ENCODE measurements at regions of chr2 and their contacts with region 1.

Region 1: DNA sequence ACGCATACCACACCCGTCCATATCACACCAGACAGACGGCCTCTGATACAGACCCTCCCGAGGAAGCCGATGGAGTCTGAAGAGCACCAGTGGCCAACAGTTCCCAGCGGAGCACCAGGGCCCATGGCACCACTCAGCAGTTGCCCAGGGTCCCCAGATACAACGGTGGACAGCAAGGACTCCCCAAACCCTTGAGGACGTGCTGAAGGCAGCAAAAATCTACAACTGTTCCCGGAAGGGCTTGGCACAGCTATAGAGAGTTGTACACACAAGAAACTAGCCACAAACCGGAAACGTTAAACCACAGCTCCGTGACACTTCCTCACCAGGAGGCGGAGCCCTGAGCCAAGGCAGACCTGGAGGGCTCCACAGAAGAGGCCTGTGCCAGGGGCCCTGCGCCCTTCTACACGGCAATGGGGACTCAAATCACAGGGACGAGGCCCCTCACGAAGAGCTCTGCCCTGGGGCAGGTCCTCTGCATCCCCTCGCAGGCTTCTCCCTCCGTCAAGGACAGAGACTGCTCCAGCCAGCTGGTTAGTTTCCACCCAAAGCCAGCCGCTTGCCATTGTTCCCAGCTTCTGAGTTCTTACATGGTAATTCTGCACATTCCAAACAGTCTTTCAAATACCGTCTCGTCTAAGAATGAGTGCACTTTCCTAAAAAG is 133.4 kb downstream of the HDAC4 start:
- DNase-seq: peak; percentile 87 to 98
- ATAC-seq: peak; percentile 80 to 93 (median 89)
- H3K4me3 ChIP-seq: peak overlapping the region; percentile 81
- H3K4me3 Mint-ChIP-seq: peak overlapping the region; percentile 98
- H3K27ac ChIP-seq: peak overlapping the region; percentile 91
- H3K27ac Mint-ChIP-seq: peak overlapping the region; percentile 99
- H3K4me1 ChIP-seq: peaks cover 77% of the 10 kb centered on the region
- H3K4me1 Mint-ChIP-seq: peaks cover 75 to 78% of the 10 kb centered on the region in 2 donors
- H3K27me3 ChIP-seq: no peaks in the 10 kb centered on the region
- H3K27me3 Mint-ChIP-seq: no peaks in the 10 kb centered on the region
- CTCF ChIP-seq: peak; percentile 29

Region 2: DNA sequence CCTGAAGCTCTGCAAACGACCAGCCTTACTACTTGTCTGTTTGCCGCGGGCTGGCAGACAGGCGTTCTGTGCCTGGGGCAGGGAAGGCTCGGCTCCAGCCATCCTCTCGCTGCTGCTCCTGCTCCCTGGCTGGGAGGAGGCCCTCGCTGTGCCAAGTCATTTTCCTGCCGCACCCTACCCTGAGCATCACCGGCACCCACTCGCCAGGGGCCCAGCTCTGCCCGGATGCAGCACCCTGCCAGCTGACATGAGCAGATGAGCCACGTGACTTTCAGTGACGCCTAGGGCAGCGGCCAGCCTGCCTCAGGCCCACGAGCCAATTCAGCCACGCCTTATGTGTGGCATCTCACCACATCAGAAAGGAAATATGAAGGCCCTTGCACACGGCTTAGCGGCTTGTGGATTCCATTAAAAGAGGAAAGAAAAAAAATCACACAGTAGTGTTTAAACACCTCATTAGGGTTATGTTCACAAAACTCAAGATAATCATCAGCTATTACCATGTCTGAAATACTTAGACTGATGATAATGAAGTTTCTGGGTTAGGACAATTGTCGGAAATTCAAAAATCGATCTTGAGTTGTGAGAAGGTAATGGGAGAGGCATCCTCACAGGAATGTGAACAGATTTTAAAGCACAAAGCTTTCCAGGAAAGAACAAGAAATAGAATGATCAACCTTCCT is 169.0 kb before region 1 on chr2:
- intact Hi-C with region 1: loop called (anchors 5 kb)
- DNase-seq: peak in 1 of 2 donors; percentile 55
- ATAC-seq: peak; percentile 84 to 93 (median 90)
- H3K4me3 ChIP-seq: no peak overlapping the region
- H3K4me3 Mint-ChIP-seq: peak overlapping the region; percentile 82
- H3K27ac ChIP-seq: peak overlapping the region; percentile 45
- H3K27ac Mint-ChIP-seq: peak overlapping the region; percentile 92
- H3K4me1 ChIP-seq: peaks cover 21% of the 10 kb centered on the region
- H3K4me1 Mint-ChIP-seq: peaks cover 21 to 28% of the 10 kb centered on the region in 2 donors
- H3K27me3 ChIP-seq: no peaks in the 10 kb centered on the region
- H3K27me3 Mint-ChIP-seq: no peaks in the 10 kb centered on the region
- CTCF ChIP-seq: no peak

Region 3: DNA sequence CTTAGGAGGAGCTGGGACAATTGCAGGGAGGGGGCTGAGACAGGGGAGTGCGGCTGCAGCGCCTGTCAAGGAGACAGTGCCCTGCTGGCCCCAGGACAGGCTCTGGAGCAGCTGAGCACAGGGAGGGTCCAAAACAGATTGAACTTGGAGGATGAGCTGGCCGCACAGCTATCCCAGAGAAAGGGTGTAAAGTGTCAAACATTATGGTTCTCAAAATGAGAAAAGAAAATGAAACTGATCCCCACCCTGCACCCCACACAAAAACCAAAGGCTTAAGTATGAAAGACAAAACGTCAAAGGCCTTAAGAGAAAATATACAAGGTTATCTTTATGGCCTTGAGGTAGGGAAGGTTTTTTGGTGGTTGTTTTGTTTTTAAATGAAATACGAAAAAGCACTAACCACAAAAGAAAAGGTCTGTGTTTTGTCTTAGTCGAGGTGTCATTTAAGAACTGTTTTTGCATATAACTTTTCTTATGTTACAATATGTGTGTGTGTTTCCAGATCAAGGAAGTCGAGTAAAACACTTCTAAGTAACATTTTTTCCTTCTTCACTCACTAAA is 21.6 kb after region 1 on chr2:
- intact Hi-C with region 1: loop called (anchors 2 kb)
- DNase-seq: peak in 1 of 2 donors; percentile 79
- ATAC-seq: peak; percentile 74 to 81 (median 76)
- H3K4me3 ChIP-seq: no peak overlapping the region
- H3K4me3 Mint-ChIP-seq: peak overlapping the region; percentile 71
- H3K27ac ChIP-seq: peak overlapping the region; percentile 89
- H3K27ac Mint-ChIP-seq: peak overlapping the region; percentile 93 to 96
- H3K4me1 ChIP-seq: peaks cover 30% of the 10 kb centered on the region
- H3K4me1 Mint-ChIP-seq: peaks cover 44% of the 10 kb centered on the region in 2 donors
- H3K27me3 ChIP-seq: no peaks in the 10 kb centered on the region
- H3K27me3 Mint-ChIP-seq: no peaks in the 10 kb centered on the region
- CTCF ChIP-seq: no peak

Region 4: GRCh38 chr2:239318790-239319661 is 51.6 kb after region 1 on chr2:
- intact Hi-C with region 1: loop called (anchors 1 kb)
- DNase-seq: peak; percentile 29 to 58
- ATAC-seq: peak; percentile 34 to 42 (median 40)
- H3K4me3 ChIP-seq: peak overlapping the region; percentile 14
- H3K4me3 Mint-ChIP-seq: peak overlapping the region; percentile 82
- H3K27ac ChIP-seq: peak overlapping the region; percentile 87
- H3K27ac Mint-ChIP-seq: peak overlapping the region; percentile 93 to 94
- H3K4me1 ChIP-seq: peaks cover 56% of the 10 kb centered on the region
- H3K4me1 Mint-ChIP-seq: peaks cover 59 to 61% of the 10 kb centered on the region in 2 donors
- H3K27me3 ChIP-seq: no peaks in the 10 kb centered on the region
- H3K27me3 Mint-ChIP-seq: no peaks in the 10 kb centered on the region
- CTCF ChIP-seq: no peak

Region 5: GRCh38 chr2:239380831-239381708 is 113.7 kb after region 1 on chr2:
- intact Hi-C with region 1: loop called (anchors 5 kb)
- DNase-seq: peak; percentile 42 to 88
- ATAC-seq: peak; percentile 78 to 87 (median 83)
- H3K4me3 ChIP-seq: peak overlapping the region; percentile 28
- H3K4me3 Mint-ChIP-seq: peak overlapping the region; percentile 96
- H3K27ac ChIP-seq: peak overlapping the region; percentile 67
- H3K27ac Mint-ChIP-seq: peak overlapping the region; percentile 93 to 97
- H3K4me1 ChIP-seq: peaks cover 20% of the 10 kb centered on the region
- H3K4me1 Mint-ChIP-seq: peaks cover 37 to 39% of the 10 kb centered on the region in 2 donors
- H3K27me3 ChIP-seq: no peaks in the 10 kb centered on the region
- H3K27me3 Mint-ChIP-seq: no peaks in the 10 kb centered on the region
- CTCF ChIP-seq: no peak

Region 6: DNA sequence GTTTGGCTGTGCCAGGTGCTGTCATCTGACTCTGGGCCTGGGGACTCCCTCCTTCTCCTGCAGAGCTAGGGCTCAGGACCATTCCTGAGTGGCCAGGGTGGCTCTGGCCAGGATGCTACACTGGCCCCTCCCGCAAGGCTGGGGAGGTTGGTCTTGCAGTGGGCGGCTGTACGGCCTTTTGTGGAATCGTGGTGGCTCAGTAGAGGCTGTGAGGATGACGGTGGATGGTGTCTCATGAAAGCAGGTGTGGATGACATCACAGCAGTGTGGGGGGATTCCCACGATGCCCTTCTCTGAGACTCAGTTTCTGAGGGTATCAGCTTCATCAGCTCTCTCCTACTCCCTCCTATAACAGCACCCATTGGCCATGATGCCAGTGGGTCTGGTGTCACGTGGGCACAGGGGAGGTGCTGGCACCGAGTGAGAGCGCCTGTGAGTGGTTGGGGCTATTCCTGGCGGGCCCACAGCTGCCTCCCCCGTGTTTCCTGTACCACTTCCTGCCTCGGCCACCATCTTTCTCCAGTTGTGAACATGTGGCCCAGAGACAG is 277.6 kb after region 1 on chr2:
- intact Hi-C with region 1: loop called (anchors 5 kb)
- DNase-seq: peak; percentile 59 to 72
- ATAC-seq: peak; percentile 88 to 93 (median 92)
- H3K4me3 ChIP-seq: no peak overlapping the region
- H3K4me3 Mint-ChIP-seq: peak overlapping the region; percentile 37
- H3K27ac ChIP-seq: no peak overlapping the region
- H3K27ac Mint-ChIP-seq: peak overlapping the region; percentile 76 to 88
- H3K4me1 ChIP-seq: peaks cover 26% of the 10 kb centered on the region
- H3K4me1 Mint-ChIP-seq: peaks cover 15 to 33% of the 10 kb centered on the region in 2 donors
- H3K27me3 ChIP-seq: no peaks in the 10 kb centered on the region
- H3K27me3 Mint-ChIP-seq: peaks cover 10 to 29% of the 10 kb centered on the region in 2 donors
- CTCF ChIP-seq: no peak